Activated CD4-positive, alpha-beta T cell treated with anti-CD3 and anti-CD28 coated beads for 36 hours (primary cell): ENCODE measurements at regions of chr9 and their contacts with region 1.

Region 1: GRCh38 chr9:136902259-136902821 is 16.0 kb downstream of the TRAF2 start:
- DNase-seq: peak; percentile 93
- ATAC-seq: peak; percentile 85
- H3K4me3 Mint-ChIP-seq: peak overlapping the region; percentile 62
- H3K27ac Mint-ChIP-seq: peak overlapping the region; percentile 98
- H3K4me1 Mint-ChIP-seq: peaks cover 41% of the 10 kb centered on the region
- H3K27me3 Mint-ChIP-seq: no peaks in the 10 kb centered on the region

Region 2: GRCh38 chr9:136564379-136564988 is 337.9 kb before region 1 on chr9:
- CTCF ChIA-PET with region 1: no interaction called
- POLR2A ChIA-PET with region 1: no interaction called
- intact Hi-C with region 1: no loop called
- DNase-seq: no peak
- ATAC-seq: no peak
- H3K4me3 Mint-ChIP-seq: no peak overlapping the region
- H3K27ac Mint-ChIP-seq: no peak overlapping the region
- H3K4me1 Mint-ChIP-seq: no peaks in the 10 kb centered on the region
- H3K27me3 Mint-ChIP-seq: no peaks in the 10 kb centered on the region

Region 3: GRCh38 chr9:136807281-136808074 is 94.9 kb before region 1 on chr9 and contains the start of gene RABL6:
- CTCF ChIA-PET with region 1: no interaction called
- POLR2A ChIA-PET with region 1: no interaction called
- intact Hi-C with region 1: loop called in 1 of 2 experiments (anchors 1 kb)
- DNase-seq: peak; percentile 86
- ATAC-seq: peak; percentile 88
- H3K4me3 Mint-ChIP-seq: peak within 1 kb of the TSS; percentile 81
- H3K27ac Mint-ChIP-seq: peak within 1 kb of the TSS; percentile 88
- H3K4me1 Mint-ChIP-seq: peaks cover 33% of the 10 kb centered on the region
- H3K27me3 Mint-ChIP-seq: no peaks in the 10 kb centered on the region
- total RNA-seq, gene RABL6: 66.2 to 71.8 TPM

Region 4: DNA sequence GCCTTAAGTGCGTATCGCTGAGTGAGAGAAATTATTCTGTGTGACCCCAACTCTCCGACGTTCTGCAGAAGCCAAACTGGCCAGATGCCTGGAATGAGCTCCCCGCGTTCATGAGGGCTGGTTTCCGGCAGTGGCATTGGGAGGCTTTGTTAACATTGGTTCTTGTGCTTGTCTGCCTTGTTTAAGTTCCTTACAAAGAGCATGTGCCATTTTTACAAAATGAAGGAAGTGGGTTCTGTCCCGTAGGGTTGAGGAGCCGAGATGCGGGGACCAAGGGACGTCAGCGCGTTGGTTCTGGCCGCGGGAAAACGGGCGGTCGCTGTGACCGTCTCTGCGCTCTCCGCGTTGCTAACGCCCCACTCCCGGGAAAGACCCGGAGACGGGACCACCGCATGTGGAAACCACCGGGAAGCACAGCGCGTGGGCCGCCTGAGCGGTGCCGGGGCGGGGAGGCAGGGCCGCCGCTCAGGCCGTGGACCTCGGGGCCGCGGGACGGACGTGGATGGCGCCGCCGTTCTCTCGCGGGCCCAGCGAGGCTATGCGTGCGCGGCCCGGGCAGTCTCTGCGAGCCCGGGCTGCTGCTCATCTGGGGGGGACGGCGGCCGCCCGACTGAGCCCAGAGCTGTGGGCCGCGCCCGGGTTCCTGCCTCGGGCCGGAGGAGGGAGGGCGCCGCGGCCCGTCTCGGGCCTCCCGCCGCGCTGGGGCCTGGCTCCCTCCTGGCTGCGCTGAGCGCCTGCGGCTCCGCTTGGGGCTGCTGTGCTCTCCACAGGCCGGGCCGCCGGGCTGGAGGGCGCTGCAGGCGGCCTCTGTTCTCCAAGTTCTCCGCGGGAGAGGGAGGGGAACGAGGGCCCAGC is 81.1 kb before region 1 on chr9:
- CTCF ChIA-PET with region 1: no interaction called
- POLR2A ChIA-PET with region 1: no interaction called
- intact Hi-C with region 1: no loop called
- DNase-seq: no peak
- ATAC-seq: peak; percentile 44
- H3K4me3 Mint-ChIP-seq: no peak overlapping the region
- H3K27ac Mint-ChIP-seq: no peak overlapping the region
- H3K4me1 Mint-ChIP-seq: peaks cover 12% of the 10 kb centered on the region
- H3K27me3 Mint-ChIP-seq: no peaks in the 10 kb centered on the region

Region 5: GRCh38 chr9:137029058-137029936 is 127.0 kb after region 1 on chr9:
- CTCF ChIA-PET with region 1: no interaction called
- POLR2A ChIA-PET with region 1: no interaction called
- intact Hi-C with region 1: no loop called
- DNase-seq: peak; percentile 88
- ATAC-seq: peak; percentile 52
- H3K4me3 Mint-ChIP-seq: peak overlapping the region; percentile 60
- H3K27ac Mint-ChIP-seq: peak overlapping the region; percentile 42
- H3K4me1 Mint-ChIP-seq: peaks cover 46% of the 10 kb centered on the region
- H3K27me3 Mint-ChIP-seq: no peaks in the 10 kb centered on the region

Region 6: GRCh38 chr9:137070201-137070905 is 168.0 kb after region 1 on chr9 and contains the start of gene SAPCD2:
- CTCF ChIA-PET with region 1: no interaction called
- POLR2A ChIA-PET with region 1: no interaction called
- intact Hi-C with region 1: no loop called
- DNase-seq: peak; percentile 92
- ATAC-seq: peak; percentile 91
- H3K4me3 Mint-ChIP-seq: peak within 1 kb of the TSS; percentile 71
- H3K27ac Mint-ChIP-seq: peak within 1 kb of the TSS; percentile 71
- H3K4me1 Mint-ChIP-seq: peaks cover 9% of the 10 kb centered on the region
- H3K27me3 Mint-ChIP-seq: no peaks in the 10 kb centered on the region
- total RNA-seq, gene SAPCD2: 6.4 to 8.8 TPM